Dorsolateral prefrontal cortex (tissue), 120 donors: ENCODE measurements at regions of chr15 and their contacts with region 1.

Region 1: GRCh38 chr15:57306161-57306943 is 70.0 kb upstream of the CGNL1 start:
- DNase-seq: peak; percentile 52 to 85 (median 75)
- H3K4me3 ChIP-seq: peak overlapping the region; percentile 36 to 86 (median 65)
- H3K27ac ChIP-seq: peak overlapping the region in 23 of 59 donors; percentile 1 to 81 (median 34)
- H3K27me3 ChIP-seq: no peaks in the 10 kb centered on the region
- CTCF ChIP-seq: peak; percentile 59 to 95 (median 88)

Region 2: GRCh38 chr15:56496635-56497034 is 809.7 kb before region 1 on chr15:
- intact Hi-C with region 1: loop called (anchors 5 to 10 kb)
- DNase-seq: no peak
- H3K4me3 ChIP-seq: peak overlapping the region in 50 of 59 donors; percentile 2 to 55 (median 36)
- H3K27ac ChIP-seq: no peak overlapping the region
- H3K27me3 ChIP-seq: no peaks in the 10 kb centered on the region
- CTCF ChIP-seq: peak; percentile 50 to 92 (median 77)

Region 3: DNA sequence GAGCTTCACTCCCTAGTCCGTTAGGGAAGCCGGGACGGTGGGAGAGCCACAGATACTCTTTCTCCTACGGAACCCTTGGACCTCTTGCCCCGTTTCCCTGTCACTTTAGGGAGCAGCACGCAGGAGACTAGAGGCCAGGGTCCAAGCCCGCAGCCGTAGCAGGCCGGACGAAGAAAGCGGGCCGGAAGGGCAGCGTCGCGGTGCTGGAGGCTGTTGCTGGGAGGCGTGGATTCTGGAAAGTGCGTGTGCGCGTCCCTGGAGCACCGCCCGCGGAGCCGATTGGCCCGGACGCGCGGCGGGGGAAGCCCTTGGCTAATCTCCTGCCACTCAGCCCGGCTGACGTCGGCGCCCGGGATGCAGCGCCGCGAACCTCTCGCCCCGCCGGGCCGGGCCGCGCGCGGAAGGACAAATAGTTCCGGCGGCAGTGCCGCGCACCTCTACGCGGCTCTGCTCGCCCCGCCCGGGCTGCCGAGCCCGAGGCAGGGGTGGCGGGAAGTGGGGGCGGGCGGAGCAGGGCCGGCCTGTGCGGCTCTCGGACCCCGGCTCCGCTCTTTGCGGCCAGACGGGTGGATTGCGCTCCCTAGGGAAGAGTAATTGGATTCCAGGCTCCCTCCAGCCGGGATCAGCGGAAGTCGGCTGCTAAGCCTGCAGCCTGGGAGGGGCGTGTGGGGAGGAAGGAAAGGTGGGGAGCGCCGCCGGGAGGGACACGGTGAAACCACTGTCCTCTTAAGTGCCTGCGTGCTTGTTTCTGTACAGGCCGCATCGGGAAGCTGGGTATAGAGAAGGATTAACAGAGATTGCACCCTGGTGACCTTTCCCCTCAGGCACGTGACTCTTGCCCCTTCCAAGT is 419.2 kb before region 1 on chr15:
- intact Hi-C with region 1: loop called (anchors 10 kb)
- DNase-seq: peak; percentile 83 to 96 (median 92)
- H3K4me3 ChIP-seq: peak overlapping the region; percentile 57 to 94 (median 81)
- H3K27ac ChIP-seq: peak overlapping the region; percentile 86 to 100 (median 99)
- H3K27me3 ChIP-seq: no peaks in the 10 kb centered on the region
- CTCF ChIP-seq: peak in 35 of 56 donors; percentile 5 to 61 (median 34)

Region 4: GRCh38 chr15:57017024-57017423 is 289.3 kb before region 1 on chr15:
- intact Hi-C with region 1: loop called in 1 of 2 experiments (anchors 10 kb)
- DNase-seq: no peak
- H3K4me3 ChIP-seq: no peak overlapping the region
- H3K27ac ChIP-seq: peak overlapping the region in 49 of 59 donors; percentile 4 to 83 (median 56)
- H3K27me3 ChIP-seq: no peaks in the 10 kb centered on the region
- CTCF ChIP-seq: peak in 47 of 56 donors; percentile 10 to 72 (median 45)

Region 5: DNA sequence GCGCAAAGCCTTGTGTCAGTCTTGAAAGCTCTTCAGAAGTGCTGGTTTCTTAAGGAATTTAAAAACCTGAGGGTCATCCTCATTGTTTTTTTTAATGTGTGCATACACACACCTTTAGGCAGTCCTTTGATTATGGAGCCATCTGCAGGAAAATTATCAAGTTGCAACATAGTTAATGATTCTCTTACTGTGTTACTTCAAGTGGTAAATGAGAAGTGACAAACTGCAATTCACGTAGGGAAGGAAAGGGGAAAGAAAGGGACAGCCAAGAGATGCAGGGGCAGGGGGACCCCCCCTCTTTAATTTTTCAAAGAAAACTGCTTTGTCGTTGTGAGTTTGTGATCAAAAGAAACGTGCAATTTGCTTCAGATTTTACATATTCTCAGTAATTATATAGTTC is 92.5 kb before region 1 on chr15:
- intact Hi-C with region 1: loop called in 1 of 2 experiments (anchors 5 kb)
- DNase-seq: no peak
- H3K4me3 ChIP-seq: peak overlapping the region in 12 of 59 donors; percentile 4 to 34 (median 18)
- H3K27ac ChIP-seq: peak overlapping the region in 38 of 59 donors; percentile 5 to 70 (median 38)
- H3K27me3 ChIP-seq: no peaks in the 10 kb centered on the region
- CTCF ChIP-seq: peak; percentile 22 to 80 (median 63)